ENCODE measurements at regions of chr1 and their contacts with region 1.

Region 1: DNA sequence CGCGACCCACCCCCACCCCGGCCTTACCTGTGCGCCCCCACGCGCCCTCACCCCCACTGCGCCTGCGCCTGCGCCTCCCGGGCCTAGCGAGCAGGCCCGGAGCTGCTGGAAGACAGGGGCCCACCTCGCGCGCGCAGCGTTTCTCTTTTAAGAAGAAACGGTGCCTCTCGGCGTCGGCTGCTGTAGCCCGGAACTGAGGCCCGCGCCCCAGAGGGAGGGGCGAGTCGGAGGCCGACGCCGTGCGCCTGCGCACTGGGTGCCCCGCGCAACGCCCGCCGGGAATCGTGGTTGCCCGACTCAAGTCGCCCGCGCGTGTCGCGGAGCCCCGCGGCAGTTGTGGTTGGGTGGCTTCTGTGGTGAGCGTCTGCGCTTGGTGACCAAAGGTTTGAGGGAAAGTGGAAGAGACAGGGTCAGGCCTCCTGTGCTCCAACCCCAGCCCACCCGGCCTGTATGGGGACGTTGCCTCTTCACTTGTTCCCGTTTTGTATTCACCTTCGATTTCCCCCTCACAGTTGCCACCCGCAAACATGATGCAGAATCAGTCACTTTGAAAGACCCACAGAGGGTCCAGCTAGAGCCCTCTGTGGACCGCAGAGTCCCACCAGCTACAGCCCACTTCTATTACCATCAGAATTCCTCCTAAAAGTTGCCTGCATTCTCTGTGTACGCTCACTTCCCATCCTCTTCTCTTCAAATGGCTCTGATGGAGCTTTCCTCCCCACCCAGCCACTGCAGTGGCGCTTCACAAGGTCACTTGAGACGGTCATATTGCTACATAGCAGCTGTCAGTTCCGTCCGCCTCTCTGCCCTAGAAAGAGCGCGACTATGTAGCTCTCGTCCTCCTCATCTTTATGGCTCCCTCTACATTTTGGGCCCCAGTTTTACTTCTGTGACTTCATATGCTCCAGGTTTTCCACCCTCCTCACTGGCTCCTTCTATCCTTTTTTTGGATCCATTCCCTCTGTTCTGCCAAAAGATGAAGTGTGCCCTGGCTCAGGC is at the start of gene ZNF692:
- DNase-seq: peak; percentile 98 to 100 (median 99)
- ATAC-seq: peak; percentile 94 to 95
- H3K4me3 ChIP-seq: peak within 1 kb of the TSS; percentile 59
- H3K27ac ChIP-seq: peak within 1 kb of the TSS; percentile 83
- H3K4me1 ChIP-seq: peaks cover 2% of the 10 kb centered on the region
- H3K27me3 ChIP-seq: no peaks in the 10 kb centered on the region
- total RNA-seq, gene ZNF692: 12.8 to 27.2 (median 19.6) TPM

Region 2: GRCh38 chr1:248670003-248670402 is 189.2 kb before region 1 on chr1:
- intact Hi-C with region 1: no loop called
- DNase-seq: no peak
- ATAC-seq: no peak
- H3K4me3 ChIP-seq: no peak overlapping the region
- H3K27ac ChIP-seq: no peak overlapping the region
- H3K4me1 ChIP-seq: no peaks in the 10 kb centered on the region
- H3K27me3 ChIP-seq: no peaks in the 10 kb centered on the region

Region 3: DNA sequence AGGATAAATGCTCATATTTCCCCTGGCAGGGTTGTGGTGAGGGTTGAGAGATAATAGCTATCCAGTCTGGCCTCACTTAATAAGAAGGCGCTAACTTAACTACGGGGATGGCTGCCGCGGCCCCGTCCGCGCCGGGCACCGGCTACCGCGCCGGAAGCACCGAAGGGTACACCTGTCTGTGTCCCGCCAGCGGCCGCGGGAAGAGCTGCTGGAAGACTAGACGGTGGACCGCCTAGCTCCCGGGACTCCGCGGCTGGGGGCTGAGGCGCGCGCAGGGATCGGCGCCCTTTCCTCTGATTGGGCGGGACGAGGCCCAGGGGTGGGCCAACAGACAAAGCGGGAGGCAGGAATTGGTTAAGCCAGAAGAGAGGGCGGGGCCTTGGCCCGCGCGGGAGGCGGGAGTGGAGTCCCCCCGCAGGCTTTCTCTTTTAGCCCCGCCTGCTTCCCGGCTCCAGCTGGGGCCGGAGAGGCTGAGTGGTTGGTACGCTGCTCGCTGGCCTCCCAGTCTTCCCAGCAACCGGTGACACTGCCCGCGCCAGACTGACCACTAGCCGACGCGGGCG is 21.3 kb before region 1 on chr1 and contains the start of gene ZNF672:
- intact Hi-C with region 1: loop called in 1 of 4 experiments (anchors 2 kb)
- DNase-seq: peak; percentile 99 to 100 (median 100)
- ATAC-seq: peak; percentile 96
- H3K4me3 ChIP-seq: peak within 1 kb of the TSS; percentile 74
- H3K27ac ChIP-seq: peak within 1 kb of the TSS; percentile 97
- H3K4me1 ChIP-seq: peaks cover 9% of the 10 kb centered on the region
- H3K27me3 ChIP-seq: no peaks in the 10 kb centered on the region
- total RNA-seq, gene ZNF672: 34.6 to 52.7 (median 40.5) TPM